ENCODE measurements at regions of chr14 and their contacts with region 1.

Region 1: GRCh38 chr14:31196839-31197492 is 10.6 kb downstream of the HECTD1 start:
- DNase-seq: no peak
- H3K4me3 Mint-ChIP-seq: no peak overlapping the region
- H3K27ac Mint-ChIP-seq: peak overlapping the region; percentile 40
- H3K4me1 Mint-ChIP-seq: peaks cover 34% of the 10 kb centered on the region
- H3K27me3 Mint-ChIP-seq: no peaks in the 10 kb centered on the region

Region 2: GRCh38 chr14:31219169-31219568 is 22.2 kb after region 1 on chr14:
- intact Hi-C with region 1: no loop called
- DNase-seq: no peak
- H3K4me3 Mint-ChIP-seq: no peak overlapping the region
- H3K27ac Mint-ChIP-seq: no peak overlapping the region
- H3K4me1 Mint-ChIP-seq: no peaks in the 10 kb centered on the region
- H3K27me3 Mint-ChIP-seq: peaks cover 4% of the 10 kb centered on the region

Region 3: GRCh38 chr14:31561155-31561846 is 364.3 kb after region 1 on chr14 and contains the start of gene NUBPL:
- intact Hi-C with region 1: loop called (anchors 2 kb)
- DNase-seq: peak; percentile 96
- H3K4me3 Mint-ChIP-seq: peak within 1 kb of the TSS; percentile 90
- H3K27ac Mint-ChIP-seq: peak within 1 kb of the TSS; percentile 95
- H3K4me1 Mint-ChIP-seq: peaks cover 21% of the 10 kb centered on the region
- H3K27me3 Mint-ChIP-seq: peaks cover 8% of the 10 kb centered on the region
- total RNA-seq, gene NUBPL: 8.7 and 9.5 TPM in 2 replicates

Measured in activated T-helper 2 cell treated with anti-CD3 and anti-CD28 coated beads, Interferon-gamma antibody, Interleukin-2, Interleukin-4, amounts not matched to agents 10 μg/mL and 5 μg/mL and 100 μg/mL, durations not matched to agents 14 hours and 24 hours and 36 hours (primary cell).